K562 (cell line): ENCODE measurements at regions of chr11 and their contacts with region 1.

Region 1: GRCh38 chr11:65013692-65014145 is 241 bp upstream of the ARL2 start:
- DNase-seq: peak; percentile 87 to 95 (median 92)
- ATAC-seq: peak; percentile 86
- H3K4me3 ChIP-seq: peak overlapping the region; percentile 67
- H3K27ac ChIP-seq: peak overlapping the region; percentile 93
- H3K4me1 ChIP-seq: peaks cover 10 to 39% of the 10 kb centered on the region in 2 experiments; a peak in 4 of 5 replicates
- H3K27me3 ChIP-seq: no peaks in the 10 kb centered on the region
- CTCF ChIP-seq: peak; percentile 39 to 79 (median 43); a peak in 4 of 6 replicates
- EP300 ChIP-seq: no peak
- POLR2A ChIP-seq: peak; percentile 67; the same call in 1 of the 2 replicates
- RAD21 ChIP-seq: peak; percentile 88 to 89; a peak in 2 of 4 replicates

Region 2: GRCh38 chr11:64996710-64997380 is 16.9 kb before region 1 on chr11 and contains the start of gene BATF2:
- CTCF ChIA-PET with region 1: no interaction called
- POLR2A ChIA-PET with region 1: interaction called, 14 read pairs
- in situ Hi-C with region 1: no loop called
- intact Hi-C with region 1: no loop called
- DNase-seq: peak; percentile 86 to 91 (median 88)
- ATAC-seq: peak; percentile 91
- H3K4me3 ChIP-seq: peak within 1 kb of the TSS; percentile 33
- H3K27ac ChIP-seq: peak within 1 kb of the TSS; percentile 52
- H3K4me1 ChIP-seq: peaks cover 23% of the 10 kb centered on the region in 2 experiments; a peak in 4 of 5 replicates
- H3K27me3 ChIP-seq: no peaks in the 10 kb centered on the region
- CTCF ChIP-seq: peak; percentile 80 to 97 (median 97)
- EP300 ChIP-seq: peak; percentile 12; the same call in 1 of the 2 replicates
- POLR2A ChIP-seq: peak; percentile 62
- RAD21 ChIP-seq: peak; percentile 88
- polyA plus RNA-seq, gene BATF2: 1.7 to 1.9 TPM

Region 3: DNA sequence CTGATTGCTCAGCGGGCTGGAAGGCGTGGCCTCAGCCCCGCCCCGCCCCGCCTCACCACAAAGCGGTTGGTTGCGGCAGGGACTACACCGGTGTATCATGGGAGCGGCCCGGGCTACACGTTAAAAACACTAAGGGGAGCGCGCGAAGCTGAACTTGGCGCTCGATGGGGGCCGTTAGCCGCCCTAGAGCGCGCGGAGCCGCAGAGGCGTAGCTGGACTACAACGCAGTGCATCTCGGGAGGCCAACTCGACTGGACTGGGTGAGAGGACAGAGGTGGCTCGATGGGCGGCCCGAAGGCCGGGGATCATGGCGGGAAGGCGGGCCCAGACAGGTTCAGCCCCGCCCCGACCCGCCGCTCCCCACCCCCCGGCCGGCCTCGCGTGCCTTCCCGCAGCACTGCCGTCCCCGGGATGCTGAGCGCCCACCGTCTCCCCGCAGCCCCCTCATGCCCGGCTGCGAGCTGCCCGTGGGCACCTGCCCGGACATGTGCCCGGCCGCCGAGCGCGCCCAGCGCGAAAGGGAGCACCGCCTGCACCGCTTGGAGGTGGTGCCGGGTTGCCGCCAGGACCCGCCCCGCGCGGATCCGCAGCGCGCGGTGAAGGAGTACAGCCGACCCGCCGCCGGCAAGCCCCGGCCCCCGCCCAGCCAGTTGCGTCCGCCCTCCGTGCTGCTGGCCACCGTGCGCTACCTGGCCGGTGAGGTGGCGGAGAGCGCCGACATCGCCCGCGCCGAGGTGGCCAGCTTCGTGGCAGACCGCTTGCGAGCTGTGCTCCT is 27.3 kb after region 1 on chr11 and contains the start of gene SAC3D1:
- CTCF ChIA-PET with region 1: interaction called, 4 read pairs
- POLR2A ChIA-PET with region 1: interaction called, 5 read pairs
- in situ Hi-C with region 1: no loop called
- intact Hi-C with region 1: loop called (anchors 2 kb)
- DNase-seq: peak; percentile 93 to 95 (median 94)
- ATAC-seq: peak; percentile 97
- H3K4me3 ChIP-seq: peak within 1 kb of the TSS; percentile 89
- H3K27ac ChIP-seq: peak within 1 kb of the TSS; percentile 96
- H3K4me1 ChIP-seq: peaks cover 10 to 56% of the 10 kb centered on the region in 2 experiments; a peak in 4 of 5 replicates
- H3K27me3 ChIP-seq: no peaks in the 10 kb centered on the region
- CTCF ChIP-seq: no peak
- EP300 ChIP-seq: peak; percentile 15; the same call in 1 of the 2 replicates
- POLR2A ChIP-seq: peak; percentile 86
- RAD21 ChIP-seq: no peak; a peak in 1 of 4 replicates
- polyA plus RNA-seq, gene SAC3D1: 0.20 to 0.80 TPM

Region 4: GRCh38 chr11:65078151-65078550 is 64.4 kb after region 1 on chr11:
- CTCF ChIA-PET with region 1: interaction called, 18 read pairs
- POLR2A ChIA-PET with region 1: interaction called, 3 read pairs
- in situ Hi-C with region 1: no loop called
- intact Hi-C with region 1: loop called (anchors 1 kb)
- DNase-seq: peak; percentile 62 to 75 (median 65)
- ATAC-seq: peak; percentile 93
- H3K4me3 ChIP-seq: no peak overlapping the region
- H3K27ac ChIP-seq: 0 out of 3 replicates have a peak overlapping the region, but pooled peaks have one; percentile 16
- H3K4me1 ChIP-seq: peaks cover 20 to 22% of the 10 kb centered on the region in 2 experiments; a peak in 4 of 5 replicates
- H3K27me3 ChIP-seq: no peaks in the 10 kb centered on the region
- CTCF ChIP-seq: peak; percentile 80 to 87 (median 83)
- EP300 ChIP-seq: no peak
- POLR2A ChIP-seq: no peak
- RAD21 ChIP-seq: peak; percentile 50 to 60

Region 5: GRCh38 chr11:65117216-65118096 is 103.7 kb after region 1 on chr11 and contains the start of gene ZNHIT2:
- CTCF ChIA-PET with region 1: interaction called, 7 read pairs
- POLR2A ChIA-PET with region 1: interaction called, 3 read pairs
- in situ Hi-C with region 1: no loop called
- intact Hi-C with region 1: loop called (anchors 1 kb)
- DNase-seq: peak; percentile 84 to 99 (median 90)
- ATAC-seq: peak; percentile 78
- H3K4me3 ChIP-seq: peak within 1 kb of the TSS; percentile 95
- H3K27ac ChIP-seq: peak within 1 kb of the TSS; percentile 86
- H3K4me1 ChIP-seq: peaks cover 33 to 41% of the 10 kb centered on the region in 2 experiments
- H3K27me3 ChIP-seq: no peaks in the 10 kb centered on the region
- CTCF ChIP-seq: peak; percentile 85 to 97 (median 93)
- EP300 ChIP-seq: peak; percentile 18; the same call in 1 of the 2 replicates
- POLR2A ChIP-seq: peak; percentile 92
- RAD21 ChIP-seq: peak; percentile 84 to 85
- polyA plus RNA-seq, gene ZNHIT2: 0.08 to 0.20 TPM